CD4-positive, alpha-beta memory T cell (primary cell): ENCODE measurements at regions of chr16 and their contacts with region 1.

Region 1: GRCh38 chr16:89507834-89508590 is at the start of gene SPG7:
- DNase-seq: peak; percentile 85 to 96 (median 93)
- H3K4me3 ChIP-seq: peak within 1 kb of the TSS; percentile 76
- H3K4me3 Mint-ChIP-seq: peak within 1 kb of the TSS; percentile 89 to 97 (median 94)
- H3K27ac ChIP-seq: peak within 1 kb of the TSS; percentile 83
- H3K27ac Mint-ChIP-seq: peak within 1 kb of the TSS; percentile 85 to 98 (median 96)
- H3K4me1 ChIP-seq: peaks cover 40% of the 10 kb centered on the region
- H3K4me1 Mint-ChIP-seq: peaks cover 18 to 53% (median 32%) of the 10 kb centered on the region in 4 donors
- H3K27me3 ChIP-seq: no peaks in the 10 kb centered on the region
- H3K27me3 Mint-ChIP-seq: no peaks in the 10 kb centered on the region
- total RNA-seq, gene SPG7: 157 to 160 TPM

Region 2: DNA sequence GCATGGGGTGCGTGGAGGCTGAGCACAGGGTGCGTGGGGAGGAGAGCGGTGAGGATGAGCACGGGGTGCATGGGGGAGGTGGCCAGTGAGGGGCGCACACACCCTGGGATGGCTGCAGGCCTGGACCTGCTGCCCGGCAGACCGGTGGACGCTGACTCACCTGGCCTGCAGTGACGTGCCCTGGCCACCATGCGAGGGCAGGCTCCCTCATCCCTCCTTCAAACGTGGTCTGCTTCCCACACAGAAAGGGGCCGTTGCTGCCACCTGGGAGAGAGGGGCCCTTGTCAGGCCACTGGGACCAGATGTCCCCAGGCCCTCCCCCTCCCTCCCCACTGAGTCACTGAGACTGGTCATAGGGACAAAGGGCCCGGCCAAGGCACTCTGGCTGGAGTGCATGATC is 676.2 kb before region 1 on chr16:
- CTCF ChIA-PET with region 1: no interaction called
- POLR2A ChIA-PET with region 1: no interaction called
- intact Hi-C with region 1: no loop called
- DNase-seq: no peak
- H3K4me3 ChIP-seq: no peak overlapping the region
- H3K4me3 Mint-ChIP-seq: no peak overlapping the region
- H3K27ac ChIP-seq: no peak overlapping the region
- H3K27ac Mint-ChIP-seq: no peak overlapping the region
- H3K4me1 ChIP-seq: no peaks in the 10 kb centered on the region
- H3K4me1 Mint-ChIP-seq: no peaks in the 10 kb centered on the region
- H3K27me3 ChIP-seq: no peaks in the 10 kb centered on the region
- H3K27me3 Mint-ChIP-seq: no peaks in the 10 kb centered on the region

Region 3: GRCh38 chr16:89314357-89314756 is 193.7 kb before region 1 on chr16:
- CTCF ChIA-PET with region 1: interaction called, 4 read pairs
- POLR2A ChIA-PET with region 1: interaction called, 39 read pairs
- intact Hi-C with region 1: loop called (anchors 1 kb)
- DNase-seq: peak; percentile 45 to 83 (median 56)
- H3K4me3 ChIP-seq: peak overlapping the region in 1 of 2 donors; percentile 33
- H3K4me3 Mint-ChIP-seq: peak overlapping the region; percentile 79 to 90 (median 83)
- H3K27ac ChIP-seq: peak overlapping the region; percentile 87
- H3K27ac Mint-ChIP-seq: peak overlapping the region; percentile 95 to 100 (median 98)
- H3K4me1 ChIP-seq: peaks cover 98% of the 10 kb centered on the region
- H3K4me1 Mint-ChIP-seq: peaks cover 69 to 96% (median 80%) of the 10 kb centered on the region in 4 donors
- H3K27me3 ChIP-seq: no peaks in the 10 kb centered on the region
- H3K27me3 Mint-ChIP-seq: no peaks in the 10 kb centered on the region

Region 4: GRCh38 chr16:89363621-89364393 is 144.2 kb before region 1 on chr16:
- CTCF ChIA-PET with region 1: no interaction called
- POLR2A ChIA-PET with region 1: interaction called, 10 read pairs
- intact Hi-C with region 1: loop called (anchors 2 kb)
- DNase-seq: peak in 4 of 5 donors; percentile 22 to 83 (median 28)
- H3K4me3 ChIP-seq: no peak overlapping the region
- H3K4me3 Mint-ChIP-seq: peak overlapping the region; percentile 22 to 76 (median 64)
- H3K27ac ChIP-seq: peak overlapping the region; percentile 26
- H3K27ac Mint-ChIP-seq: peak overlapping the region; percentile 85 to 92 (median 90)
- H3K4me1 ChIP-seq: peaks cover 85% of the 10 kb centered on the region
- H3K4me1 Mint-ChIP-seq: peaks cover 62 to 99% (median 82%) of the 10 kb centered on the region in 4 donors
- H3K27me3 ChIP-seq: no peaks in the 10 kb centered on the region
- H3K27me3 Mint-ChIP-seq: no peaks in the 10 kb centered on the region

Region 5: GRCh38 chr16:89422905-89423630 is 84.9 kb before region 1 on chr16:
- CTCF ChIA-PET with region 1: no interaction called
- POLR2A ChIA-PET with region 1: no interaction called
- intact Hi-C with region 1: no loop called
- DNase-seq: peak in 2 of 5 donors; percentile 22 to 76
- H3K4me3 ChIP-seq: no peak overlapping the region
- H3K4me3 Mint-ChIP-seq: peak overlapping the region in 7 of 8 donors; percentile 43 to 76 (median 58)
- H3K27ac ChIP-seq: no peak overlapping the region
- H3K27ac Mint-ChIP-seq: peak overlapping the region; percentile 73 to 93 (median 88)
- H3K4me1 ChIP-seq: peaks cover 87% of the 10 kb centered on the region
- H3K4me1 Mint-ChIP-seq: peaks cover 62 to 85% (median 74%) of the 10 kb centered on the region in 4 donors
- H3K27me3 ChIP-seq: no peaks in the 10 kb centered on the region
- H3K27me3 Mint-ChIP-seq: no peaks in the 10 kb centered on the region

Region 6: GRCh38 chr16:89484923-89485679 is 22.9 kb before region 1 on chr16:
- CTCF ChIA-PET with region 1: interaction called, 5 read pairs
- POLR2A ChIA-PET with region 1: interaction called, 79 read pairs
- intact Hi-C with region 1: loop called (anchors 1 kb)
- DNase-seq: peak in 2 of 5 donors; percentile 19 to 56
- H3K4me3 ChIP-seq: peak overlapping the region in 1 of 2 donors; percentile 6
- H3K4me3 Mint-ChIP-seq: peak overlapping the region; percentile 72 to 92 (median 84)
- H3K27ac ChIP-seq: peak overlapping the region; percentile 42
- H3K27ac Mint-ChIP-seq: peak overlapping the region; percentile 86 to 98 (median 94)
- H3K4me1 ChIP-seq: peaks cover 89% of the 10 kb centered on the region
- H3K4me1 Mint-ChIP-seq: peaks cover 70 to 91% (median 81%) of the 10 kb centered on the region in 4 donors
- H3K27me3 ChIP-seq: no peaks in the 10 kb centered on the region
- H3K27me3 Mint-ChIP-seq: no peaks in the 10 kb centered on the region

Region 7: GRCh38 chr16:89534252-89534756 is 26.3 kb after region 1 on chr16:
- CTCF ChIA-PET with region 1: interaction called, 3 read pairs
- POLR2A ChIA-PET with region 1: interaction called, 13 read pairs
- intact Hi-C with region 1: loop called (anchors 1 kb)
- DNase-seq: peak; percentile 52 to 65 (median 61)
- H3K4me3 ChIP-seq: no peak overlapping the region
- H3K4me3 Mint-ChIP-seq: peak overlapping the region; percentile 0 to 78 (median 64)
- H3K27ac ChIP-seq: peak overlapping the region; percentile 1
- H3K27ac Mint-ChIP-seq: peak overlapping the region; percentile 83 to 96 (median 93)
- H3K4me1 ChIP-seq: peaks cover 25% of the 10 kb centered on the region
- H3K4me1 Mint-ChIP-seq: peaks cover 14 to 24% (median 20%) of the 10 kb centered on the region in 4 donors
- H3K27me3 ChIP-seq: no peaks in the 10 kb centered on the region
- H3K27me3 Mint-ChIP-seq: no peaks in the 10 kb centered on the region